ENCODE measurements at regions of chr10 and their contacts with region 1.

Region 1: GRCh38 chr10:11611248-11612020 is at the start of gene USP6NL:
- DNase-seq: peak; percentile 62 to 79 (median 79)
- H3K4me3 ChIP-seq: peak within 1 kb of the TSS; percentile 66 to 82 (median 77)
- H3K4me3 Mint-ChIP-seq: peak within 1 kb of the TSS; percentile 90 to 95
- H3K27ac ChIP-seq: peak within 1 kb of the TSS; percentile 42 to 73
- H3K27ac Mint-ChIP-seq: peak within 1 kb of the TSS; percentile 73 to 93 (median 84)
- H3K4me1 ChIP-seq: peaks cover 20 to 22% of the 10 kb centered on the region in 2 donors
- H3K4me1 Mint-ChIP-seq: peaks cover 33% of the 10 kb centered on the region
- H3K27me3 ChIP-seq: no peaks in the 10 kb centered on the region
- H3K27me3 Mint-ChIP-seq: peaks cover 2 to 4% (median 2%) of the 10 kb centered on the region in 3 donors
- CTCF ChIP-seq: no peak
- polyA plus RNA-seq, gene USP6NL: 5.5 to 7.7 (median 6.7) TPM

Region 2: DNA sequence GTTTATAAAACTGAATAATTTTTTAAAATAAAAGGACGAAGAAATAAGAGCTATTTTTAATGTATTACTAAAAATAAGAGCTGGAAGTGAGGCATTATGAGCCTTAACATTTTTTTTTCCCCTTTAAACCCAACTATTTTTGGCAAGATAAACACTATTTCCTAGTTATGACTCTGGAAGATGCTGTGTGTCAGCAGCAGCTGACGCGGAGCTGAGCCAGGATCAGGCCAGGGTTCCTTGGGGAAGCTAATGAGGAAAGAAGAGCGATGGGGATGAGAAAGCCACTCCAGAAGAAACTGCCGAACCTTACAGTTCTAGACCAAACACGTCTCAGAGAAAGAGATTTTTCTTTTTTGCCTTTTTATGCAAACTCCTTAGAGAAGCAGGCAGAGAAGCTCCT is 85.9 kb before region 1 on chr10:
- intact Hi-C with region 1: loop called in 1 of 2 experiments (anchors 10 kb)
- DNase-seq: no peak
- H3K4me3 ChIP-seq: no peak overlapping the region
- H3K4me3 Mint-ChIP-seq: no peak overlapping the region
- H3K27ac ChIP-seq: no peak overlapping the region
- H3K27ac Mint-ChIP-seq: no peak overlapping the region
- H3K4me1 ChIP-seq: peaks cover 18 to 23% of the 10 kb centered on the region in 2 donors
- H3K4me1 Mint-ChIP-seq: peaks cover 38% of the 10 kb centered on the region
- H3K27me3 ChIP-seq: no peaks in the 10 kb centered on the region
- H3K27me3 Mint-ChIP-seq: peaks cover 0 to 3% (median 2%) of the 10 kb centered on the region in 3 donors
- CTCF ChIP-seq: no peak

Region 3: GRCh38 chr10:11742005-11742778 is 130.8 kb after region 1 on chr10 and contains the start of gene ECHDC3:
- intact Hi-C with region 1: loop called in 1 of 2 experiments (anchors 10 kb)
- DNase-seq: peak; percentile 61 to 74 (median 73)
- H3K4me3 ChIP-seq: peak within 1 kb of the TSS; percentile 49 to 74 (median 53)
- H3K4me3 Mint-ChIP-seq: peak within 1 kb of the TSS; percentile 71 to 81
- H3K27ac ChIP-seq: peak within 1 kb of the TSS in 1 of 2 donors; percentile 73
- H3K27ac Mint-ChIP-seq: peak within 1 kb of the TSS in 3 of 7 donors; percentile 50 to 67 (median 51)
- H3K4me1 ChIP-seq: peaks cover 24 to 37% of the 10 kb centered on the region in 2 donors
- H3K4me1 Mint-ChIP-seq: peaks cover 35% of the 10 kb centered on the region
- H3K27me3 ChIP-seq: no peaks in the 10 kb centered on the region
- H3K27me3 Mint-ChIP-seq: peaks cover 2 to 21% (median 9%) of the 10 kb centered on the region in 3 donors
- CTCF ChIP-seq: no peak
- polyA plus RNA-seq, gene ECHDC3: 9.2 to 10.6 (median 9.4) TPM